Posterior vena cava (tissue), 2 donors: ENCODE measurements at regions of chr11 and their contacts with region 1.

Region 1: GRCh38 chr11:27698872-27699474 is 1.3 kb downstream of the BDNF start:
- DNase-seq: peak; percentile 90

Region 2: DNA sequence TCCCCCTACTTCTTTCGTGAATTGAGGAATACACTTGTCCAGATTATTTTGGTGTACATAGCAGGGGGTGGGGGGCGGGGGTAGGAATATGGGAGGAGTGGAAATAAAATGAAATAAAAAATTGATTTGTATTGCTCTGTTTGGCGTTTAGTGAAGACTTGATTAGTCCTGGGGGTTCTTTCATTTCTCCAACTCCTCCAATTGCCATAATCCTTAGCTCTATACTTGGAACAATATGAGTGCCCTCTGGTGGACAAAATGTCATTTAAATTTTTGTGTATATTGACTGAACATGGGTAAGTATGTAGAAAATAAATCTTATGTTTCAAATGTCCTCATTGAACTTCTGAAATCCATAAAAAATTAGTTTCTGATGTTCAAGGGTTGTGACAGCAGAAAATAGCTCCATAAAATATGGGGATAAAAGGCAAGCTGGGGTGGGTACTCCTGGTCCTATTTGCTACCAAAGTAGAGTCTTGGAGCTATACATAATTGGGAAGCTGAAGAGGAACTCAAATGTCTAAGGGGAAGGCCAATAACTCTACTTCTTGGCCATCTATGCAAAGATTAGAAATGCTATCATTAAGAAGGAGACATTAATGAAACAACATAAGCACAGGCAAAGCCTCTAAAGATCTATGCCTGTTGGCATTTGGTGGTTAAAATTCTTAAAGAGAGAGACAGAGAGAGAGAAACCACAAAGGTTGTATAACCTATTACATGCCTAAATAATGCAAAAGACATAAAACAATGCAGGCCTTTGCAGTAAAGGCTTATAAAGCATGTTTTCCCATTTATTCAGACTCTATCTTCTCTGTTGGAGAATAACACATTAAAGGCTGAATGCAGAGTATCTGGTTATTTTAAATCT is 830.8 kb after region 1 on chr11:
- intact Hi-C with region 1: loop called (anchors 10 kb)
- DNase-seq: no peak

Region 3: DNA sequence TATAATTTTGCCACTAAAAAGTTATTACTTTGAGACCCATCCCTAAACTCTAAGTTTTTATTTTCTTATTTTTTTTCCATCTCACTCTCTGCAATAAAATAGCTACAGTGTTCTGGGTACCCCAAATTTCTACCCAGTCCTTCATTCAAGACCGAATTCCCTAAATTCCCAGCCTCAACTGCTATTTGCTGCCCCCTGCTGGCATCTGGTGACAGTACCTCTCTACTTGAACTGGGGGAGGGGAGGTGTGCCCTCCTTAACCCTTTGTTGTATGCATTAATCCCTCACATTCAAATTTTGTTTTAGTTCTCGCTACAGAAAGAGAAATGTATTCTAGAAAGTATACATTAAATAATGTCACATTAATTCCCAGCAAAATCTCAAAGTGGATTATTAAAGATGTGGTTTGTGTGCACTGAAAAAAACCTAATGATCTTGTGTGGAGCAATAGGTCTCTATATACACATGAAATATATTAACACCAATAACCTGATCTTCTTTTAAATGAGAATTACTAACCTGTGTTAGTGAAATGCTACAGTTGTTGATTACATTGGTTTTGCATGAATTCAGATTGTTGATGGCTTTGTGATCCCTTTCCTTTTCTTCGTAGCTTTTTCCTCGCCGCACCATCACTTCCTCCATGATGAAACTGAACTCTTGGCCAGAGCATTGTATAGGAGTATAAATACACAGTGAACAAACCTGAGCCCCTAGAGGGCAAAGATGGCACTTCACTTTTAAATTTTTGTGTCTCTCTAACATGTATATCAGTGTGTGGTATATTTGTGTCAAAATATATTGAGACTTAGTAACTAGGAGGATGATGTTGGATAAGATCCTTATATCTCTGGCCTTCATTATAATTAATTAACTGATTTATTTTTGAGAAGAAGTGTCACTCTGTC is 999.2 kb after region 1 on chr11:
- intact Hi-C with region 1: loop called in 1 of 2 experiments (anchors 10 kb)
- DNase-seq: peak; percentile 83